Mammary epithelial cell (primary cell): ENCODE measurements at regions of chr3 and their contacts with region 1.

Region 1: DNA sequence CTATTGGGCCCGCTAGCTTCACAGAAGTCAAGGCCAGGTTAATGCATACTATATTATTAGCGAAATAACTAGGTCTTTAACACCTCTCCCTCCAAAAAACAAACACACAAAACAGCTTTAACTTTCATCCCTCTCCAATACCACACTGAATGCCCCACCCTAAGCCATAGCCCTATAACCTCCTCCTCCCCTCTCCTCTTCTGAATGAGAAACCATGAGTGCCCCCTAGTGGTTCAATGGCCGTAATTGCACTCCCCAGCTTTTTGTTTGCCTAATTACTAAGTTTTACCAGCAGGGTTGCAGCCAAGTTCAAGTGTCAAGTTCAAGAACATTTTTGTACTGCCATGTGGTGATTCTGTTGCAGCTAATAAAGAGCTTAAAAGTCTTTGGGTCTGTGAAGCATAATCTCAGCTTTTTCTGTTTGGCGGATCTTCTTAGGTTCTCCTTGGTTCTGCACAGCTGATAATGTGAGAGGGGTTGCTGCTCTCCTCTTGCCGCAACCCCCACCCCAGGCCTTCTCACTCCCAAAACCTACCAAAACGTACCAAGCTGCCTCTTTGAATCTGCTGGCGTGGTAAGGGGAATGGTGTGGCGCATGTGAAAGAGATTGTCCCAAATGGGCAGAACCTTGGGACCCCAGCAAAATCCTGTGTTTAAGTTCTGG is 57.9 kb downstream of the RPL22L1 start:
- DNase-seq: peak; percentile 77
- H3K4me3 ChIP-seq: no peak overlapping the region
- H3K27ac ChIP-seq: peak overlapping the region; percentile 48
- H3K4me1 ChIP-seq: peaks cover 37% of the 10 kb centered on the region
- H3K27me3 ChIP-seq: no peaks in the 10 kb centered on the region
- CTCF ChIP-seq: peak; percentile 87 to 98

Region 2: DNA sequence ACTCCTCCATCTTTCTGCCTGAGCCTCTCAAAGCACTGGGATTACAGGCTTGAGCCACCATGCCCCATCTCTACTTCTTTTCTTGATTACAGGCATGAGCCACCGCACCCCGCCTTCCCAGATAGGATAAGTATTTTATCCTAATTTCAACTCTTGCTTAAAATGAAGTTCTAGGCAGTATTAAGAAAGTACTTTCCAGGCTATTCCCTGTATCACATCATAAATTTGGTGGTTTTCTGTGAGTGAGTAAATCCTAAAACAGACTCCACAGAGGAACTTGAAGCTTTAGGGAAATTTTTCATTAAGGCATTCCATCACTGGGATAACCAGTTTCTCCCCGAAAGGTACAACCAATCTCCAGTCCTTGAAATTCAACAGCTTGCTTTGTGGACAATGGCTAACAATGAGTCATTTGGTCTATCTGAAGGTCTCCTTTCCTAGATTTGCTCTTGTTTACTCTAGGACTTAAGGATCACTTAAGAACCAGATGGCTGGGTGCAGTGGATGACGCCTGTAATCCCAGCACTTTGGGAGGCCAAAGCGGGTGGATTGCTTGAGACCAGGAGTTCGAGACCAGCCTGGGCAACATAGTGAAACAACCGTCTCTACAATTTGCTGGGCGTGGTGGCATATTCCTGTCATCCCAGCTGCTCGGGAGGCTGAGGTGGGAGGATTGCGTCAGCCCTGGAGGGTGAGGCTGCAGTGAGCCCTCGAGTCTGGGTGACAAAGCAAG is 504.2 kb before region 1 on chr3:
- CTCF ChIA-PET with region 1: no interaction called
- dilution Hi-C with region 1: no loop called
- in situ Hi-C with region 1: loop called in 1 of 2 experiments (anchors 5 kb)
- intact Hi-C with region 1: loop called (anchors 2 kb)
- DNase-seq: peak; percentile 38
- H3K4me3 ChIP-seq: no peak overlapping the region
- H3K27ac ChIP-seq: no peak overlapping the region
- H3K4me1 ChIP-seq: no peaks in the 10 kb centered on the region
- H3K27me3 ChIP-seq: no peaks in the 10 kb centered on the region
- CTCF ChIP-seq: no peak

Region 3: DNA sequence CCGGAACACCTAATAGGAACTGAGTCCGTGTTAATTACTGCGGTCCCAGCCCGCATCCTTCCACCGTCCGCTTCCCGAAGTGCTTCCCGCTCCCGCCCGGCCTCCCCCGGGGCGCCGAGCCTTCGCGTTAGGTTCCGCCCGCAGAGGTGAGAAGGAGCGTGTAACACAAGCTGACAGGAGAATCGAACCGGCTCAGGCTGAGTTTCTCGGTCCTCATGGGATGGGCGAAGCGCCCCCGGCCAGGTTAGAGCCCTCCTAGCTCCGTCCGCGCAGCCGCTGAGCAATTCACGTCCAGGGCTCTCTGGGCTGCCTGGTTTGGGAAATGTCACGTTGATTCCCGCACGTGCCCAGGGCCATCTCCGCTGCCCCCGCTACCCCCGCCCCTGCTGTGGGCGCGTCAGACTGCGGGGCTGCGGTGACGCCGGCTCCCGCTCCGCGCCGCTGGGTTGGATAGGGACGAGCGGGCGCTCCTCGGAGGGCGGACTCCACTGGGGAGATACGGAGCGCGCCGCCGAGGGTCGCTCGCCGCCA is 392.4 kb before region 1 on chr3:
- CTCF ChIA-PET with region 1: no interaction called
- dilution Hi-C with region 1: loop called (anchors 5 kb)
- in situ Hi-C with region 1: loop called (anchors 5 kb)
- intact Hi-C with region 1: loop called (anchors 1 kb)
- DNase-seq: no peak
- H3K4me3 ChIP-seq: peak overlapping the region in 1 of 3 experiments; percentile 4
- H3K27ac ChIP-seq: no peak overlapping the region
- H3K4me1 ChIP-seq: peaks cover 13% of the 10 kb centered on the region
- H3K27me3 ChIP-seq: peaks cover 8% of the 10 kb centered on the region
- CTCF ChIP-seq: no peak

Region 4: GRCh38 chr3:170553788-170554757 is 258.0 kb before region 1 on chr3:
- CTCF ChIA-PET with region 1: interaction called, 3 read pairs
- dilution Hi-C with region 1: no loop called
- in situ Hi-C with region 1: no loop called
- intact Hi-C with region 1: loop called (anchors 1 kb)
- DNase-seq: no peak
- H3K4me3 ChIP-seq: no peak overlapping the region
- H3K27ac ChIP-seq: no peak overlapping the region
- H3K4me1 ChIP-seq: no peaks in the 10 kb centered on the region
- H3K27me3 ChIP-seq: no peaks in the 10 kb centered on the region
- CTCF ChIP-seq: no peak

Region 5: DNA sequence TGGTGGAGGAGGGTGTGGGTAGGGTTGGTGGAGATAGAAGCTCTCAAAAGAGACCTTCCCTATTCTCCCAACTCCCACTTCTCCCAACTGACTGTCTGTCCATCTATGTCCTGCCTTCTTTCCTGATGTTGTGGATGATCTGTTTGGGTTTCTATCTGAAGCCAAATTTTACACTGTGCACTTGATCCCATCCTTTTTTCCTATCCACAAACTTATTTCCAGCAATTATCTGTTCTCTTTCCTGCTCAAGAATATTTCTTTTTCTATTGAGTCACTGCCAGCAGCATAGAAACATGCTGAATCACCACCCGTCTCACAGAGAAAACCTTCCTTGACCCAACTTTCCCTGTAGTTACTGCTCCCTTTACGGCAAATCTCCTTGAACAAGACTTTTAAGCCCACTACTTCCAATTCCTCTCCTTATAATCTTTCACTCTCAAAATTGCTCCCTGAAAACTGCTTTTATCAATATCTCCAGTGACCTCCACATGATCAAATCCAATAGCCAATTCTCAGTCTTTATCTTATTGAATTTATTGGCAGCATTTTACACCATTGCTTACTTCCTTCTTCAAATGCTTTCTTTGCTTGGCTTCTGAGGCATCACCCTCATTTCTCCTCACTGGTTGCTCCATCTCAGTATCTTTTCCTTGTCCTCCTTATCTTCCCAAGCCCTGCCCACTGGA is 84.9 kb before region 1 on chr3:
- CTCF ChIA-PET with region 1: no interaction called
- dilution Hi-C with region 1: no loop called
- in situ Hi-C with region 1: no loop called
- intact Hi-C with region 1: loop called (anchors 1 kb)
- DNase-seq: peak; percentile 84
- H3K4me3 ChIP-seq: peak overlapping the region in 2 of 3 experiments; percentile 4 to 12
- H3K27ac ChIP-seq: peak overlapping the region; percentile 97
- H3K4me1 ChIP-seq: peaks cover 42% of the 10 kb centered on the region
- H3K27me3 ChIP-seq: no peaks in the 10 kb centered on the region
- CTCF ChIP-seq: no peak

Region 6: DNA sequence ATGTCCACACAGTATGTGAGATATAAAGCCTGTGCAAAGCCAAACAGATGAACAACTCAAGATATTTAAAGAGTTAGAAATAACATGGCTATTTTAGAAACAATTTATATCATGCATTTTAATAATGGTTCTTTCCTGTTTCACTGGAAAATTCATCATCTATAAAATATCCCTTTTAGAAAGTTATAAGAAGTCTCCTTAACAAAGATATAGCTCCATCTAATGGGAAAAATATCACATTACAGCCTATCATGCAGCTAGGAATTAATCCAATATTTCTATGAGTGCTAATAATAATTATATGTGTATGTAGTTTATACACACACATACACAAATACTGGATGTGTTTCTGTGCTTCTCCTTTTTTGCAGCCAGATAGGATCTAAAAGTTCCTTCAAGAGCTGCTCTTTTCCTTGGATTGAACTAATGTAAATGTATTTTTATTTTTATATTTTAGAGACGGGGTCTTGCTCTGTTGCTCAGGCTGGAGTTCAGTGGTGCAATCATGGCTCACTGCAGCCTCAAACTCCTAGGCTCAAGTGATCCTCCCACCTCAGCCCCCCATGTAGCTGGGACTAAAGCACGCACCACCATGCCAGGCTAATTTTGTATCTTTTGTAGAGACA is 36.3 kb after region 1 on chr3:
- CTCF ChIA-PET with region 1: no interaction called
- dilution Hi-C with region 1: loop called (anchors 5 kb)
- in situ Hi-C with region 1: no loop called
- intact Hi-C with region 1: loop called (anchors 5 kb)
- DNase-seq: no peak
- H3K4me3 ChIP-seq: no peak overlapping the region
- H3K27ac ChIP-seq: no peak overlapping the region
- H3K4me1 ChIP-seq: no peaks in the 10 kb centered on the region
- H3K27me3 ChIP-seq: no peaks in the 10 kb centered on the region
- CTCF ChIP-seq: peak; percentile 46 to 59

Region 7: DNA sequence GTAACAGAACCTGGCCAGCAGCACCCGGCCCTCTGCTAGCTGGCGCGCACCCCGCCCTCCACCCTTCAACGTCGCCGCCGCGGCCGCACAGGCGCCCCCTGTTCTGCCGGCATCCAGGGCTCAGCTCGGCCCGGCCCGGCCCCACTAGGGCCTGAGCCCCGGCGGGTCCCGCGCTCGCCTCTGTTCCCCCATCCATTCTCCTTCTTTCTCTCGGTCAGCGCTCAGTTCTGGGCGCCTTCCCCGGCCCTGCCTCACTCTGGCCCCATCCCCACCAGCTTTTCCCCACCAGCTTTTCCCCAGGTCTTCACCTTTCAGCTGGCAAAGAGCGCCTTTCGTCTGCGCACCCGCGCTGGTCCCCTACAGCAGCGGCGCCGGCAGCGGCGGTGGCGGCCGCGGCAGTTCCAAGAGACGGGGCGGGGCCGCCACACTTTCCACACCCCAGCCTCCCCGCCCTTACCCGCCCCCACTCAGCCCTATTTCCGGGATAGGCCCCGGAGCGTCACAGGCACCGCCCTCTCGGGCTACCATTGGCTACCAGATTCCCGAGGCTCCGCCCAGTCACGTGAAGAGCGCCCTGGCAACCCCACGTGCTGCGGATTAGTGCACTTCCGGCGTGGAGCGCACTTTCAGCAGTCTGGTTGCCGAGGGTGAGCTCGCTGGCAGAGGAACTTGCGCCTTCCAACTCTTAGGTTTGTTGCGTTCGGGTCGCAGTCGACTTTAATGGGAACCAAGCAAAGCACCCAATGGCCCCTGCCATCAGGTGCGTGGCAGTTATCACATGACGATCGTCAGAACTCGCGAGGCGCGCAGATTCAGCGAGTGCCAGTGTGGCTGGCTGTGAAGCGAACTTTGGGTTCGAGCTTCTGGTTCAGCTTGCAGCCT is 96.4 kb after region 1 on chr3 and contains the start of gene EIF5A2:
- CTCF ChIA-PET with region 1: no interaction called
- dilution Hi-C with region 1: no loop called
- in situ Hi-C with region 1: no loop called
- intact Hi-C with region 1: no loop called
- DNase-seq: peak; percentile 89
- H3K4me3 ChIP-seq: peak within 1 kb of the TSS; percentile 77 to 85 (median 83)
- H3K27ac ChIP-seq: peak within 1 kb of the TSS; percentile 58
- H3K4me1 ChIP-seq: peaks cover 18% of the 10 kb centered on the region
- H3K27me3 ChIP-seq: no peaks in the 10 kb centered on the region
- CTCF ChIP-seq: no peak
- total RNA-seq, gene EIF5A2: 10.7 to 22.8 TPM